Activated CD4-positive, alpha-beta T cell treated with anti-CD3 and anti-CD28 coated beads, Interleukin-2, amount 10 ng/mL, durations not matched to agents 24 days and 14 days (primary cell): ENCODE measurements at regions of chr6 and their contacts with region 1.

Region 1: DNA sequence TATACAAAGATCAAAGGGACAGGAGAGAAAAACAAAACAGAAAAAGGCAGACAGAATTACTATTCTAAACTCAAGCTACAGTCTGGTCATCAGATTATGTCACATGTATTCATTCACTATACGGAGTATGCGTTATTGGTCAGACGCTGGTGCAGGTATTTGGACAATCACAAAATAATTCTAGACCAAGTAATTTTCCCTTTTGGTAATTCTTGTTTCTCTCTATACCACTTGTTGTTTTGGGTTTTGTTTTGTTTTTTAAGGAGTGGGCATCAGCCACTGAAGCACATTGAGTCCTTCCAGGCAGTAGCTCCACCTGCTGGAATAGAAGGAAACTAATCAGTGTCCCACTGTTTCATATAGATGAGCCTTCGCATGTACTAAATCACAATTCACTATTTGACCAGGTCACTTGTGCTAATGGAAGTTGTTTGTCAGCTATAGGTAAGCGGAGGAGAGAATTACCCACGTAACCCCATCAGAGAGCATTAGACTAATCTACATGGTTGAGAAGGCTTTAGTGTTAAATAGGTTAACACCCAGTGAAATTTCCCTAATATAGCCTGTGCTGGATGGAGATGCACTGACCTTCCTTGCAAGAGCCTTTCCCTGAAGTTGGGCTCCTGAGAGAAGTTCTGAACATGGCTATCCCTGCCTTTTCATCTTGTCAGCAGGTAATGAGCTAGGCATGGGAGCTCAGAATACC is 77.9 kb downstream of the TNFAIP3 start:
- DNase-seq: peak; percentile 77
- H3K4me3 Mint-ChIP-seq: peak overlapping the region; percentile 23
- H3K27ac Mint-ChIP-seq: peak overlapping the region; percentile 81
- H3K4me1 Mint-ChIP-seq: peaks cover 57% of the 10 kb centered on the region
- H3K27me3 Mint-ChIP-seq: no peaks in the 10 kb centered on the region

Region 2: GRCh38 chr6:137903933-137904821 is 40.8 kb before region 1 on chr6:
- intact Hi-C with region 1: loop called (anchors 1 kb)
- DNase-seq: peak; percentile 81
- H3K4me3 Mint-ChIP-seq: peak overlapping the region; percentile 75
- H3K27ac Mint-ChIP-seq: peak overlapping the region; percentile 99
- H3K4me1 Mint-ChIP-seq: peaks cover 50% of the 10 kb centered on the region
- H3K27me3 Mint-ChIP-seq: no peaks in the 10 kb centered on the region

Region 3: DNA sequence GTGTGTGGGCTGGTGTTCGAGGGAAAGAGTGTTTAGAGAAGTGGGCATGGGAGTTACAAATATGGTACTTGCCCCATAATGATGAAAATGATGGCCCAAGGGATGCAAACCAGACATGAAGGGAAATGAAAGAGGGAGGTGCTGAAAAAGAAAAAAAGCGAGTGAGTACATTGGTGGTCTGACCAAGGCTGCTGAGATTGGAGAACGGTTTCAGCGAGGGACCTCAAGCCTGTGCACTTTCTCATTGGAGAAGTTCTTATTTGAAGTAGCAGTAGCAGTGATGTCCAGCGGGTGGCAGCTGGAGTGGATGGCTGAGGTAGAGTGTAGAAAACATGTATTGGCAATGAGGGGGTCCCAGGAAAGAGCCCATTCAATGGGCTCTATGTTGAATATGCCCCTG is 23.1 kb before region 1 on chr6:
- intact Hi-C with region 1: no loop called
- DNase-seq: peak; percentile 54
- H3K4me3 Mint-ChIP-seq: no peak overlapping the region
- H3K27ac Mint-ChIP-seq: no peak overlapping the region
- H3K4me1 Mint-ChIP-seq: peaks cover 43% of the 10 kb centered on the region
- H3K27me3 Mint-ChIP-seq: no peaks in the 10 kb centered on the region